ENCODE measurements at regions of chr2 and their contacts with region 1.

Region 1: DNA sequence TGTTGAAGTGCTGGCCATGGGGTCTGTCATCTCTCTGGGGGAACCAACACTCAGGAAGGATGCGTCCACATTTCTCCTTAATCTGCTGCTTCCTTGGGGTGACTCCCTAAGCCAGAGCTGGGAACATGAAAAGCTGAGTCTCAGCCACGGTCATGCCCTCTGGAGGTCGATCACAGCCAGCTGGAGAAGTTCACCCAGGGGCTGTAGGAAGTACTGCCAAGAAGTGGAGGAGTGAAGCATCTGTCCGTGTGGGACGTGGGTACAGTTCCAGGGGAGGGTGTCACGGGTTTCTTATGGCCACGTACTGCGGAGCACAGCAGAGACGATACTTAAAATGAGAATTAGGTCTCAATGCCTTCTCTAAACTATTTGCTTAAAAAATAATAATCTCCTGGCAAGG is 42.4 kb upstream of the IGFBP2 start:
- DNase-seq: no peak
- H3K4me3 ChIP-seq: no peak overlapping the region
- H3K27ac ChIP-seq: peak overlapping the region; percentile 53 to 57 (median 55)
- H3K4me1 ChIP-seq: peaks cover 9 to 25% (median 19%) of the 10 kb centered on the region in 4 donors
- H3K27me3 ChIP-seq: no peaks in the 10 kb centered on the region
- CTCF ChIP-seq: peak in 1 of 3 experiments; percentile 8
- EP300 ChIP-seq: no peak
- POLR2A ChIP-seq: no peak

Region 2: GRCh38 chr2:216525972-216526371 is 64.8 kb before region 1 on chr2:
- intact Hi-C with region 1: loop called (anchors 5 kb)
- DNase-seq: no peak
- H3K4me3 ChIP-seq: no peak overlapping the region
- H3K27ac ChIP-seq: no peak overlapping the region
- H3K4me1 ChIP-seq: no peaks in the 10 kb centered on the region
- H3K27me3 ChIP-seq: no peaks in the 10 kb centered on the region
- CTCF ChIP-seq: no peak
- EP300 ChIP-seq: no peak
- POLR2A ChIP-seq: no peak

Region 3: DNA sequence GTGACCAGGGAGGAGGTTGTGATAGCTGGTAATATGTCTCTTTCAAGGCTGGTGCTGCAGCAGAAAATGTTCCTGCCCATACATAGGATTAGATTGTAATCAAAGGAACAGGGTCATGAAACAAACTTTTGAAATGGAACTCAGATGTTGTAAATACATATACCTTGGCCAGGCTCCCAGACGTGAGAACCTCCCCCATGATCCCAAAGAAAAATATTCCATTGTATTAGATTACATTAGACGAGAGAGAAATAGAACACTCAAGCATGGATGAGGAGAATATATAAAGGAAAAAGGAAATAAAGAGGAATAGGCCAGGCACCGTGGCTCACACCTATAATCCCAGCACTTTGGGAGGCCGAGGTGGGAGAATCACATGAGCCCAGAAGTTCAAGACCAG is 39.5 kb before region 1 on chr2:
- intact Hi-C with region 1: no loop called
- DNase-seq: no peak
- H3K4me3 ChIP-seq: no peak overlapping the region
- H3K27ac ChIP-seq: peak overlapping the region; percentile 77 to 84 (median 80)
- H3K4me1 ChIP-seq: peaks cover 59 to 98% (median 96%) of the 10 kb centered on the region in 4 donors
- H3K27me3 ChIP-seq: no peaks in the 10 kb centered on the region
- CTCF ChIP-seq: no peak
- EP300 ChIP-seq: no peak
- POLR2A ChIP-seq: no peak

Region 4: GRCh38 chr2:216632952-216633615 is 42.3 kb after region 1 on chr2 and contains the start of gene IGFBP2:
- intact Hi-C with region 1: loop called (anchors 5 kb)
- DNase-seq: no peak
- H3K4me3 ChIP-seq: peak within 1 kb of the TSS; percentile 74 to 84 (median 79)
- H3K27ac ChIP-seq: peak within 1 kb of the TSS; percentile 76 to 84 (median 81)
- H3K4me1 ChIP-seq: peaks cover 16 to 54% (median 51%) of the 10 kb centered on the region in 4 donors
- H3K27me3 ChIP-seq: peaks cover 0 to 4% (median 0%) of the 10 kb centered on the region in 4 donors
- CTCF ChIP-seq: no peak
- EP300 ChIP-seq: no peak
- POLR2A ChIP-seq: no peak
- total RNA-seq, gene IGFBP2: 188 to 446 (median 280) TPM

Region 5: GRCh38 chr2:216949700-216950413 is 359.1 kb after region 1 on chr2:
- intact Hi-C with region 1: no loop called
- DNase-seq: no peak
- H3K4me3 ChIP-seq: no peak overlapping the region
- H3K27ac ChIP-seq: no peak overlapping the region
- H3K4me1 ChIP-seq: no peaks in the 10 kb centered on the region
- H3K27me3 ChIP-seq: no peaks in the 10 kb centered on the region
- CTCF ChIP-seq: no peak
- EP300 ChIP-seq: no peak
- POLR2A ChIP-seq: no peak

Region 6: DNA sequence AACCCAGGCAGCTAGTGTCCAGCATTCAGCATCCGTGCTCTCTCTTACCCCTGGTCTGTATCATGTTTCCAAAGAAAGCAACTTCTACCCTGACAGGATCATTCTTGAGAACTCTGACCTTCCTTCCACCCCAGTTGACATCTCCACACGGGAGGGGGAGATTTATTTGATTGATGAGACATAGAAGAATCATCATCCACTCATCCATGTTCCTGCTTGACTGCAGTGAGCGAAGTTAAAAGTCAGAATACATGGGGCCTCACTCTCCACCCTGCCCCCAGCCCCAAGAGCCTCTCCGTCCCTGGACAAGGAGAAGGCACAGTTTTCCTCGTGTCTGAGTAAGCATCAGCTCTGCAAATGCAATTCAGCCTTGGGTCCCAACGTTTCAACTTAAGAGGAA is 625.1 kb after region 1 on chr2:
- intact Hi-C with region 1: no loop called
- DNase-seq: no peak
- H3K4me3 ChIP-seq: no peak overlapping the region
- H3K27ac ChIP-seq: no peak overlapping the region
- H3K4me1 ChIP-seq: peaks cover 0 to 8% (median 6%) of the 10 kb centered on the region in 4 donors
- H3K27me3 ChIP-seq: no peaks in the 10 kb centered on the region
- CTCF ChIP-seq: no peak
- EP300 ChIP-seq: no peak
- POLR2A ChIP-seq: no peak

Measured in esophagus muscularis mucosa (tissue), 4 donors.